ENCODE measurements at regions of chr6 and their contacts with region 1.

Region 1: GRCh38 chr6:90230548-90231215 is 66.0 kb downstream of the BACH2 start:
- DNase-seq: no peak
- ATAC-seq: no peak
- H3K4me3 ChIP-seq: no peak overlapping the region
- H3K4me3 Mint-ChIP-seq: peak overlapping the region; percentile 40 to 82 (median 56)
- H3K27ac ChIP-seq: peak overlapping the region; percentile 88
- H3K27ac Mint-ChIP-seq: peak overlapping the region; percentile 42 to 99 (median 95)
- H3K4me1 ChIP-seq: peaks cover 24 to 97% of the 10 kb centered on the region in 2 donors
- H3K4me1 Mint-ChIP-seq: peaks cover 54 to 100% (median 98%) of the 10 kb centered on the region in 7 donors
- H3K27me3 ChIP-seq: no peaks in the 10 kb centered on the region
- H3K27me3 Mint-ChIP-seq: peaks cover 0 to 2% (median 0%) of the 10 kb centered on the region in 5 donors

Region 2: DNA sequence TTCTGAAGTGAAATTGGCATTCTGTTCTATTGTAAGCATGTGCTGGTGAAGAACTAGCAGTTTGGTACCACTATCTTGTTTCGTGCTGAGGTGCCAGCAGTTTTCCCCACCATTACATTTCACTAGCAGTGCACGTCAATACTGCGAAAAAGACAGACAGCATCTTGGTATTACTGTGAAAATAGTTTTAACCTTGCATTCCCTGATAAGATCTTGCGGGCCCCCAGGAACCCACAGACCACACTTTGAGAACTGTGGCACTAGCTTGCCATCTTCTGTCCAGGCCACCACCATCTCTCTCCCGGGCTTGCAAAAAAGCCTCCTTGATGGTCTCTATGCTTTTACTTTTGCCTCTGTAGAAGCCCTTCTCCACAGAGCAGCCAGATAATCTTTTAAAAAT is 119.7 kb before region 1 on chr6:
- CTCF ChIA-PET with region 1: no interaction called
- POLR2A ChIA-PET with region 1: no interaction called
- intact Hi-C with region 1: loop called in 1 of 2 experiments (anchors 5 kb)
- DNase-seq: peak in 8 of 9 donors; percentile 51 to 78 (median 64)
- ATAC-seq: peak; percentile 84
- H3K4me3 ChIP-seq: no peak overlapping the region
- H3K4me3 Mint-ChIP-seq: peak overlapping the region; percentile 35 to 81 (median 58)
- H3K27ac ChIP-seq: peak overlapping the region; percentile 56
- H3K27ac Mint-ChIP-seq: peak overlapping the region; percentile 73 to 92 (median 82)
- H3K4me1 ChIP-seq: peaks cover 26 to 57% of the 10 kb centered on the region in 2 donors
- H3K4me1 Mint-ChIP-seq: peaks cover 36 to 97% (median 90%) of the 10 kb centered on the region in 7 donors
- H3K27me3 ChIP-seq: no peaks in the 10 kb centered on the region
- H3K27me3 Mint-ChIP-seq: no peaks in the 10 kb centered on the region

Region 3: DNA sequence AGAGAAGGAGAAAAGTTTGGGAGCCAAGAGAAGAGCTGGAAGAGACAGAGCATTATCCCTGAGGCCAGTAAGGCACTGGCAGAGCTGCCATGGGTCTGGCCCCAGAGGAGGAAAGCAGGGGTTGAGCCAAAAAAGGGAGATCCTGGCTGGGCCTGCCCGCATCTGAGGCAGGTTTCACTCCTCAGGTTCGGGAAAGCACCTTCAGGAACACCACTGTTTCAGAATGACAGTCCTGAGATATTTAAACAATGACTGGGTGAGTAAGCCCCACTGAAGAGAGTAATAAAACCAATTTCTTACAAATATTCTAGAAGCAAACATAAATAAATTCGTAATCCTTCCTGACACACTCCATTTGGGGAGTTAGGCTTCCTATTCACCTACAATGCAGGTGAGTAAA is 86.3 kb before region 1 on chr6:
- CTCF ChIA-PET with region 1: no interaction called
- POLR2A ChIA-PET with region 1: no interaction called
- intact Hi-C with region 1: no loop called
- DNase-seq: peak in 1 of 9 donors; percentile 57
- ATAC-seq: no peak
- H3K4me3 ChIP-seq: no peak overlapping the region
- H3K4me3 Mint-ChIP-seq: peak overlapping the region in 3 of 10 donors; percentile 14 to 32 (median 15)
- H3K27ac ChIP-seq: no peak overlapping the region
- H3K27ac Mint-ChIP-seq: peak overlapping the region in 6 of 9 donors; percentile 32 to 74 (median 64)
- H3K4me1 ChIP-seq: peaks cover 0 to 68% of the 10 kb centered on the region in 2 donors
- H3K4me1 Mint-ChIP-seq: peaks cover 42 to 98% (median 86%) of the 10 kb centered on the region in 7 donors
- H3K27me3 ChIP-seq: no peaks in the 10 kb centered on the region
- H3K27me3 Mint-ChIP-seq: no peaks in the 10 kb centered on the region

Region 4: DNA sequence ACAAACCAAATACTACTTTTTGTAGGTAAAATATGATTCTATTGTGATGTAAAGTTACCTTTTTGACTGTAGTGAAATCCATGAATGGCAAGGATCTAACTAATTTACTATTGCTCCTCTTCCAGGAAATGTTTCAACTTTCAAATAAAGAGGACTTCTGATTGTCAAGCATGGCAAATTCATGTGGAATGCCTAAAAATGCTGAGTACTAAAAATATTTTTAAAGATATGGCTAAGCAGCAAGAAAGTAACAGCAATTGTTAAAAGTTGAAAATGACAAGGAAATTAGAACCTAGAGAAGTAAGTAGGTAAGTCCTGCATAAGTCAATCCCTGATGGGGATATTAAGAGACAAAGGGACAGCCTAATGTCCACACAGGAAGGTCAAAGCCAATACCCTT is 60.1 kb before region 1 on chr6:
- CTCF ChIA-PET with region 1: no interaction called
- POLR2A ChIA-PET with region 1: no interaction called
- intact Hi-C with region 1: no loop called
- DNase-seq: no peak
- ATAC-seq: no peak
- H3K4me3 ChIP-seq: no peak overlapping the region
- H3K4me3 Mint-ChIP-seq: peak overlapping the region in 2 of 10 donors; percentile 15 to 36
- H3K27ac ChIP-seq: no peak overlapping the region
- H3K27ac Mint-ChIP-seq: peak overlapping the region in 8 of 9 donors; percentile 4 to 62 (median 40)
- H3K4me1 ChIP-seq: peaks cover 0 to 35% of the 10 kb centered on the region in 2 donors
- H3K4me1 Mint-ChIP-seq: peaks cover 14 to 83% (median 78%) of the 10 kb centered on the region in 7 donors
- H3K27me3 ChIP-seq: no peaks in the 10 kb centered on the region
- H3K27me3 Mint-ChIP-seq: no peaks in the 10 kb centered on the region

Region 5: DNA sequence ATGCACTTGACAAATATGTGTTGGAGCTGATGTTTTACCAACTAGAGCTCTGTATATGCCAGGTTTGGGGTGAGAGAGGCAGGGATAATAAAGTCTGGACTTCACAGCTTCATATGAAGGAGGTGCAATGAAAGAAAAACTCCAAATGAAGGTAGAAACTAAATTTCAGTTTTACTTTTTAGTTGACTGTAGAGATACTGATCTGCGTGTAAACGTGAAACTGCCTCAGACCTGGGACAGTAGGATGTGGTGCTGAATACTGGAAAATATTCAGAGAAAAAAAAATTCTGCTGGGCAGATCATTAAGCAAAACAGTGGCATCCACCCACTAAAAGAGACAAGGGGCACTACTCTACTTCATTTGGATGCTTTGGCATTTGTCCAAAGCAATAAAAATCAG is 28.5 kb before region 1 on chr6:
- CTCF ChIA-PET with region 1: no interaction called
- POLR2A ChIA-PET with region 1: interaction called, 3 read pairs
- intact Hi-C with region 1: loop called in 1 of 2 experiments (anchors 1 kb)
- DNase-seq: no peak
- ATAC-seq: peak; percentile 45
- H3K4me3 ChIP-seq: no peak overlapping the region
- H3K4me3 Mint-ChIP-seq: peak overlapping the region; percentile 35 to 74 (median 53)
- H3K27ac ChIP-seq: peak overlapping the region; percentile 25
- H3K27ac Mint-ChIP-seq: peak overlapping the region; percentile 64 to 91 (median 79)
- H3K4me1 ChIP-seq: peaks cover 0 to 21% of the 10 kb centered on the region in 2 donors
- H3K4me1 Mint-ChIP-seq: peaks cover 24 to 92% (median 53%) of the 10 kb centered on the region in 7 donors
- H3K27me3 ChIP-seq: no peaks in the 10 kb centered on the region
- H3K27me3 Mint-ChIP-seq: no peaks in the 10 kb centered on the region

Region 6: DNA sequence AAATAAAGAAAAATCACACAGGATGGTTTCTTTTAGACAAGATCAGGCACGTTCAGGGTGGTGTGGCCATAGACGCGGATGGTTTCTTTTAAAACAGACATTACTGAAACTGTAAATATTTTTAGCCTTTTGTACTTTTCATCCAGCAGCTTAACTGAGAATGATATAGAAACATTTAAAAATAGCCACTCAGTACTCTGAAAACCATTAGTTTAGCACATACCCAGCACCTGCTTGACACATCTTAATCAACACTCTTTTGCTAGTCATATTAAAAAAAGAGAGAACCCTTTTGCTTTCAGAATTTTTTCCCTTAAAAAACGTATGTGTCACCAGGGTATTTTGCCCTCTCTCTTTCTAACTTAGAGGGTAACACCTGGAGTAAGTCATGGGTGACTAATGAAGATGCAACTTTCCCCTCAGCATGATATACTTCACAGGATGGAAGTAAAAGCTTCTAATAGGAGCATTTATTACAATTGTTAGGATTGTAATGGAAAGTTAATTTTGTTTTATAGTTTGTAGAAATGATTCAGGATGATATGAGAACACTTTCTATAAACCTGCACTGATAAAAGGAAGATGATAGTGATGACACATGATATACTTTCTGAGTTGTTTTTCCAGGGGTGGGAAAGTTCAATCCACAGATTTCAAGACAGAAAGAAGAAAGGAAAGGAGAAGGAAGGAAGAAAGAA is 20.8 kb after region 1 on chr6:
- CTCF ChIA-PET with region 1: no interaction called
- POLR2A ChIA-PET with region 1: interaction called, 5 read pairs
- intact Hi-C with region 1: loop called (anchors 1 to 2 kb)
- DNase-seq: no peak
- ATAC-seq: no peak
- H3K4me3 ChIP-seq: no peak overlapping the region
- H3K4me3 Mint-ChIP-seq: peak overlapping the region in 8 of 10 donors; percentile 7 to 71 (median 48)
- H3K27ac ChIP-seq: peak overlapping the region; percentile 53
- H3K27ac Mint-ChIP-seq: peak overlapping the region; percentile 49 to 98 (median 85)
- H3K4me1 ChIP-seq: peaks cover 0 to 55% of the 10 kb centered on the region in 2 donors
- H3K4me1 Mint-ChIP-seq: peaks cover 37 to 99% (median 90%) of the 10 kb centered on the region in 7 donors
- H3K27me3 ChIP-seq: no peaks in the 10 kb centered on the region
- H3K27me3 Mint-ChIP-seq: no peaks in the 10 kb centered on the region

Region 7: DNA sequence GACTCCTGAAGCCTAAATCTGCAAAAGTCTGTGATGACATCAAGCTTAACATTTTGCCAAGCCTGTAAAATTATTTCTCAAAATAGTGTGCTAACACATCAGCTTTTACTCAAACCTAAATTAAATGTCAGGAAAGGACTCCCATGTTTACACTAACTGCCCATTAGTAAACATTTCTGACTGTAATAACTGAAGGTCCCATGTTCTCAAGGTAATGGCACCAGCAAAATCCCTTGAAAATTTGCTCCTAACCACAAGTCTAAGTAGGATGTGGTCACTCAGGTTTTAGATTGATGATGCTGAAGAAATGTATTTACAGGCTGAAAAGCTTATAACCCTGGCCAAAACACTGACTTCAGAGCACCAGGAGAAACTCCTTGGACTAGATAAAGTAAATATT is 33.0 kb after region 1 on chr6:
- CTCF ChIA-PET with region 1: interaction called, 3 read pairs
- POLR2A ChIA-PET with region 1: interaction called, 8 read pairs
- intact Hi-C with region 1: loop called in 1 of 2 experiments (anchors 1 kb)
- DNase-seq: no peak
- ATAC-seq: no peak
- H3K4me3 ChIP-seq: no peak overlapping the region
- H3K4me3 Mint-ChIP-seq: peak overlapping the region in 4 of 10 donors; percentile 44 to 82 (median 68)
- H3K27ac ChIP-seq: peak overlapping the region; percentile 52
- H3K27ac Mint-ChIP-seq: peak overlapping the region in 8 of 9 donors; percentile 70 to 98 (median 96)
- H3K4me1 ChIP-seq: peaks cover 0 to 91% of the 10 kb centered on the region in 2 donors
- H3K4me1 Mint-ChIP-seq: peaks cover 48 to 100% (median 97%) of the 10 kb centered on the region in 7 donors
- H3K27me3 ChIP-seq: no peaks in the 10 kb centered on the region
- H3K27me3 Mint-ChIP-seq: no peaks in the 10 kb centered on the region

Region 8: GRCh38 chr6:90947184-90948064 is 716.7 kb after region 1 on chr6:
- CTCF ChIA-PET with region 1: no interaction called
- POLR2A ChIA-PET with region 1: no interaction called
- intact Hi-C with region 1: no loop called
- DNase-seq: no peak
- ATAC-seq: no peak
- H3K4me3 ChIP-seq: no peak overlapping the region
- H3K4me3 Mint-ChIP-seq: no peak overlapping the region
- H3K27ac ChIP-seq: no peak overlapping the region
- H3K27ac Mint-ChIP-seq: no peak overlapping the region
- H3K4me1 ChIP-seq: no peaks in the 10 kb centered on the region
- H3K4me1 Mint-ChIP-seq: no peaks in the 10 kb centered on the region
- H3K27me3 ChIP-seq: no peaks in the 10 kb centered on the region
- H3K27me3 Mint-ChIP-seq: peaks cover 0 to 3% (median 0%) of the 10 kb centered on the region in 5 donors